ENCODE measurements at regions of chr6 and their contacts with region 1.

Region 1: GRCh38 chr6:70107852-70108629 is 194.8 kb downstream of the COL9A1 start:
- DNase-seq: no peak
- ATAC-seq: no peak

Region 2: GRCh38 chr6:69732640-69733039 is 375.4 kb before region 1 on chr6:
- intact Hi-C with region 1: loop called (anchors 10 kb)
- DNase-seq: no peak
- ATAC-seq: no peak

Region 3: DNA sequence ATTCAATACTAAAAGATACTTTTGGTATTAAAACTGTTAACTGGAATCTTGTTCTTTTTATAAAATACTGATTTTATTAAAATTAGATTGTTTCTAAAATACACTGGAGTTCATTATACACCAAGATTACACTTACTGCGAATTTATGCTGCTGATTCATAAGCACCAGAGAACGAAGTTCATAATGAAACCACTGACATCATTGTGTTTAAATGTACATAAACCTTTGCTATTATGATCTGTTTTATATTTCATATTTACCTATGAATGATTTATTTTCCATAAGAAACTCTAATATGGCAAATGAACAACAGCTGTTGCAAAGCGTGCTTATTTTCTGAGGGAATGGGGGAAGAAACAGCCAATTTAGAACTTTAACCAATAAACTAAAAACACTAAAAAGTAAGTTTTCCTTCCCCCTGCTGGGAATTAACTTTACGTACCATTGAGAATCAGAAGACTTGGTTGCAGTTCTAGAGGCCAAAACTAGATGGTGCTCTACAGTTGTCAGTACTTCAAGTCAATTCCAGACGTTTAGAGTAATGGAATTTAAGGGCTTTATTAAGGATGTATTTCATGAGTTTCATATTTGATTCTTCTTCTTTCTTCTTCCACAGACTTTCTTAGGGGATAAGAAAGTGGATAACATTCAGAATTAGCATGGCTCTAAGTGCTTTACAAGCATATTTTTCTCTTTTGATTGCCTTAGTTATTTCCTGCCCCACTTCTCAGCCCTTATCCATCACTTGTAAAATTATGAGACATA is 272.4 kb before region 1 on chr6:
- intact Hi-C with region 1: loop called (anchors 2 kb)
- DNase-seq: no peak
- ATAC-seq: peak; percentile 56

Region 4: DNA sequence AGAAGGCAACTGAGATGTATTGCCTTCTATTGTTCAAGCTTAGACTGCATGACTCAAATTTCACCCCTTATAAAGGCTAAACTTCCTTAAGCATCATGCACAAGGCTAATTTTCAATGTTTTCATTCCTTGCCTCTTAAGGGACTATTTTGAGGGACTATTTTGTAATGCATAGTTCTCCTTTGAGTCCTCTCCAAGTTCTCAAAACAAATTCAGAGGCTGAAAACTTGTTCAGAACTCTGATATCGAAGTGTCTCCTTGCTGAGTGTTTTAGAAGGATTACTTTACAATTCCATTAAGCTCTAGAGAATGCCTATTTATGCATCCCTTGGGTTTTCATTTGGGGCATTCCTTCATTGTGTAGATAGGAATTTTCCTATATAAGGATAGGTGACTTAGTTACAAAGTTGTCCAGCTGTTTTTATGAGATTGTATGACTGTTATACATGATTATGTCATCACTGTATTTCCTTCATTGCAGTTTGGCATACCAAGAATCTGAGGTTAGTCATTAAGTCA is 200.0 kb before region 1 on chr6:
- intact Hi-C with region 1: no loop called
- DNase-seq: no peak
- ATAC-seq: no peak

Region 5: GRCh38 chr6:70221025-70221714 is 113.1 kb after region 1 on chr6:
- intact Hi-C with region 1: no loop called
- DNase-seq: no peak
- ATAC-seq: no peak